WTC11 (cell line): ENCODE measurements at regions of chr4 and their contacts with region 1.

Region 1: DNA sequence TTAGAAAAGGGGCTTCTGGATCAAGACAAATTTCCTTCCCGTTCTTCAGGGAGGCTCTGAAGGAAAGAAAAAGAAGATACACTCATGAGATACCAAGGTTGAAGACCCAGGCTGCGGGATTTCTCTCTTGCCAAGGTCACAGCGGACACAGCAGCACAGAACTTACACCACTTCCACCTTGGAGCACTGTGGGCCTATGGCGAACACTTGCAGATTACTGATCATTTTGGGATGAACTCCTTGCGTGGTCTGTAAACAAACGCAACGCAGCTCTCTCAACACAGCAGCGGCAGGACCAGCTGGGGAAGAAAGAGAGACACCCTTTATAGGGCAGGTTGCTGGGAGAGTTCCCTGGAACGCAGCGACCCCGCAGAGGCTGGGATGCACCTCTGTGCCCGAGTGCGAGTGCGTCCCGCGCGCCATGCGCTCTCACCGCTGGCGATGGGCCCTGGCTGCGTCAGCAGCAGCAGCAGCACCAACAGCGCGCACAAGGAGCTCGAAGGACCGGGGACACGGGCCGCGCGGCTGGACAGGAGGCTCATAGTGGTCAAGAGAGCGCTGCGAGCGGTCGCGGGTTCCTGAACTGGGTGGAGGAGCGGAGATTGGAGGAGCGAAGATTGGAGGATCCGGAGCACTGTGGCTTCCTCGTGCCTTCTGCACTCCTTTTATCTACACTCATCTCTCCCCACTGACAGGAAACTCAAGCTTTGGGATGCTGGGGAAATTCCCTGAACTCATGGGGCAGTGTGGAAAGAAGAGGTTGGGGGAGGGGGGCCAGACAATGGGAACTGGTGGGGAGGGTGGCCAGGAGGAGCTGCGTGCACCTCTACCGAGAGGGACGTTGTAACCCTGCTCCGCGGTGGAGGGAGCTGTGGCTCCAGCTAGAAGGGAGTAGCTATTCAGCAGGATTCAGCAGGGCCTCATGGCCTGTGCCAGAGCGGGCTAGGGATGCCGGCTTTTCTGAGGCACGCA is at the start of gene CXCL5:
- DNase-seq: peak; percentile 75
- ATAC-seq: peak; percentile 98
- H3K4me3 Mint-ChIP-seq: peak within 1 kb of the TSS; percentile 86
- H3K27ac Mint-ChIP-seq: peak within 1 kb of the TSS; percentile 93
- H3K4me1 Mint-ChIP-seq: peaks cover 39% of the 10 kb centered on the region
- H3K27me3 Mint-ChIP-seq: peaks cover 23% of the 10 kb centered on the region
- CTCF ChIP-seq: no peak
- total RNA-seq, gene CXCL5: 3.6 to 8.8 TPM (median 8.1 TPM) in 3 replicates

Region 2: GRCh38 chr4:73875401-73875800 is 122.9 kb before region 1 on chr4:
- CTCF ChIA-PET with region 1: no interaction called
- POLR2A ChIA-PET with region 1: no interaction called
- DNase-seq: no peak
- ATAC-seq: no peak
- H3K4me3 Mint-ChIP-seq: no peak overlapping the region
- H3K27ac Mint-ChIP-seq: no peak overlapping the region
- H3K4me1 Mint-ChIP-seq: no peaks in the 10 kb centered on the region
- H3K27me3 Mint-ChIP-seq: peaks cover 11% of the 10 kb centered on the region
- CTCF ChIP-seq: no peak

Region 3: GRCh38 chr4:74038161-74039064 is 40.1 kb after region 1 on chr4 and contains the start of gene CXCL3:
- CTCF ChIA-PET with region 1: interaction called, 20 read pairs
- POLR2A ChIA-PET with region 1: interaction called, 4 read pairs
- DNase-seq: peak; percentile 86
- ATAC-seq: peak; percentile 86
- H3K4me3 Mint-ChIP-seq: peak within 1 kb of the TSS; percentile 89
- H3K27ac Mint-ChIP-seq: peak within 1 kb of the TSS; percentile 75
- H3K4me1 Mint-ChIP-seq: peaks cover 39% of the 10 kb centered on the region
- H3K27me3 Mint-ChIP-seq: peaks cover 4% of the 10 kb centered on the region; the same call in 1 of the 2 replicates
- CTCF ChIP-seq: no peak
- total RNA-seq, gene CXCL3: 3.5 to 7.7 TPM (median 7.0 TPM) in 3 replicates

Region 4: GRCh38 chr4:74098450-74098994 is 100.2 kb after region 1 on chr4:
- CTCF ChIA-PET with region 1: interaction called, 13 read pairs
- POLR2A ChIA-PET with region 1: interaction called, 3 read pairs
- DNase-seq: peak; percentile 22
- ATAC-seq: peak; percentile 29; the same call in 1 of the 2 replicates
- H3K4me3 Mint-ChIP-seq: peak overlapping the region; percentile 78
- H3K27ac Mint-ChIP-seq: no peak overlapping the region
- H3K4me1 Mint-ChIP-seq: peaks cover 9% of the 10 kb centered on the region
- H3K27me3 Mint-ChIP-seq: peaks cover 36% of the 10 kb centered on the region
- CTCF ChIP-seq: no peak

Region 5: DNA sequence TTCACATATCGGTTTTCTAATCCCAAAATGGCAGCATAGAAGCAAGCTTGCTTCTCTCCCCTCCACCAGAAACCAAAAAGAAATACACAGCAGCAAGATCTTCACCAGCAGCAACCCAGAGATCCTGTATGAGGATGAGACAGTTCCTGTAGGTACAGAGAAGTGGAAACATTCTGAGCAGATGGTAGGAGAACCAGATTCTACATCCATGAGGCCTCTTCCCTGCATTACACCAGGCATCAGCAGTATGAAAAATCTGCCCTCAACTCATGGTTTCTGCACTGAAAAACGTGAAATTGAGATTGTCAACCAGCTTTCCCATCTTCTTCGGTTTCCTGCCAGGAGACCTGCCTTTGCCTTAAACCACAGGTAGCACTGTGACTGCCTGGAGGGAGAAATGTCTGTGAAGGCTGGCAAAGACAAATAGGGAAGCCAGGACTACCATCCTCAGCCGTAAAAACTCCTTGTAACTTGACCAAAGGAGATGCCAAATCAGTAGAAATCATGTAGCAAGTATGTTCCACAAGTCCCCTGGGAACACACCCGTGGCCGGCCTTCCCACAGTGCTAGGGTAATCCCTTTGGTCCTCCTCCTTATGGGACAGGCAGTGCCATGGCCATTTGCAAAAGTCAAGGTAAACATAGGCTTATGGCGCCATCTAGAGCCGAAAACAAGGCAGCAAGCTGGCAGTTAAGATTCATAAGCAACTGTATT is 135.6 kb after region 1 on chr4:
- CTCF ChIA-PET with region 1: interaction called, 16 read pairs
- POLR2A ChIA-PET with region 1: no interaction called
- DNase-seq: peak; percentile 80
- ATAC-seq: peak; percentile 99
- H3K4me3 Mint-ChIP-seq: no peak overlapping the region
- H3K27ac Mint-ChIP-seq: no peak overlapping the region
- H3K4me1 Mint-ChIP-seq: peaks cover 6% of the 10 kb centered on the region
- H3K27me3 Mint-ChIP-seq: no peaks in the 10 kb centered on the region; the same call in 1 of the 2 replicates
- CTCF ChIP-seq: peak; percentile 63; the same call in 1 of the 2 replicates